Ascending aorta (tissue), 2 donors: ENCODE measurements at regions of chr6 and their contacts with region 1.

Region 1: GRCh38 chr6:129672881-129673643 is 36.9 kb downstream of the ARHGAP18 start:
- DNase-seq: no peak
- H3K4me3 ChIP-seq: no peak overlapping the region
- H3K27ac ChIP-seq: peak overlapping the region; percentile 71 to 76
- H3K4me1 ChIP-seq: peaks cover 12 to 13% of the 10 kb centered on the region in 2 donors
- H3K27me3 ChIP-seq: no peaks in the 10 kb centered on the region
- CTCF ChIP-seq: no peak

Region 2: DNA sequence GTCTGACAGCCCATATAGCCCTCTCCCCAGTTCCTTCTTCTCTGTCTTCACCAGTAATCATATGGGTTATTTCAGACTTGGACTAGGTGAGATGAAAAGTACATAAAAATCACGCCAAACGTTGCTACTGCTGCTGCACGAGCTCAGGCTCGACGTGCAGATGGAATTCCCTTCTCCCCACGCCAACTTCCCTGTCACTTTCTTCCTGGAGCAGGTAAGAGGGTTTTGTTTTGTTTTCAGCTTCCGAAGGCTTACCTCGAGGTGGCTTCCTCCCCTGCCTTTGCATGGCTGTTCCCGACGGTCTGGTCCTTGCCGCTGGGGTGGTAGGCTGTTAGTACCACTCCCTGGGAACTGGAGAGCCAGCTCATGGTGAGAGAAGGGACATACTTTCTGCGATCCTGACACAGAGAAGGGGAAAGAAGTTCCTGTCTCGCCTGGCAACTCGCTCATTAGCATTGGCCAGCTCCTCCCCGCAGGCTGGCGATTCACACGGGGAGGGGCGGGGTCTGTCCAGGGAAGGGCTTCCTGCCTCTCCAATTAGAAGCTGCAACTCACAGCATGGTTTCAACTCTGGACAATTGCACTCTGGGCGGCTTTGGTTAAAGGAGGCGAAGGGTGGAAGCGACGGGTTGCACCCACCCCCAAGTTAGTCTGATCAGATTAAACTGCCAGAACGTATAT is 36.8 kb after region 1 on chr6 and contains the start of gene ARHGAP18:
- intact Hi-C with region 1: loop called (anchors 5 kb)
- DNase-seq: peak; percentile 83 to 95
- H3K4me3 ChIP-seq: peak within 1 kb of the TSS; percentile 62 to 68
- H3K27ac ChIP-seq: peak within 1 kb of the TSS; percentile 76 to 78
- H3K4me1 ChIP-seq: peaks cover 0 to 4% of the 10 kb centered on the region in 2 donors
- H3K27me3 ChIP-seq: no peaks in the 10 kb centered on the region
- CTCF ChIP-seq: no peak
- total RNA-seq, gene ARHGAP18: 10.7 TPM